Naive thymus-derived CD8-positive, alpha-beta T cell (primary cell): ENCODE measurements at regions of chr2 and their contacts with region 1.

Region 1: DNA sequence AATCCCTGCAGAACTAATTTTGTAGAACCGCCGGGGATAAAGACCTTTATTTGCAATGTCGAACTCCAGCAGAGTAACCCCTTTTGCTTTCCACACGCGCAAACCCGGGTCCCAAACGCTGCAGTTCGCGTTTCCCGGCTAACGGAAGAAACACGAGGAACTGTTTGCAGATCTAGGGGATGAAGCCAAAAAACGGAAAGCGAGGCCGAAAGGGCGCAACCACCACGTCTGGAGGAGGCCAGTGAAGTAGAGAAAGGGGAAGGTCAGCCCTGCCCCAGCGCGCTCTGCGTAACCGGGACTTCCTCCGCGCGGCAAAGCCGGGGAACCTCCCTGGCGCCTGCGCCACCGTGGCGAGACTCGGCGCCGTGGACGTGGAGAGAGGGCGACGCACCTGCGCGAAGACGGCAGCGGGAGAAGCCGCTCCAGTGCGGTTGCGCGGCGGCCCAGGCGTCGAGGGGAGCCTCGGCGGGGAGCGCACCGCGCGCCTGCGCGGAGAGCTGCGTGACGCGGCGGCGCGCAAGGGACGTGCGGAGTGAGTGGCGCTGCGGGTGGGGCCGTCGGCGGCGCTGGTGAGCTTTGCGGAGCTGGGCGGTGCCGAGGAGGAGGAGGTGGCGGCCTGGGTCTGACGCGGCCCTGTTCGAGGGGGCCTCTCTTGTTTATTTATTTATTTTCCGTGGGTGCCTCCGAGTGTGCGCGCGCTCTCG is at the start of gene PPP1CB:
- DNase-seq: peak; percentile 89 to 99 (median 98)
- ATAC-seq: peak; percentile 83 to 87
- H3K4me3 Mint-ChIP-seq: peak within 1 kb of the TSS; percentile 88 to 98 (median 96)
- H3K27ac Mint-ChIP-seq: peak within 1 kb of the TSS; percentile 89 to 100 (median 98)
- H3K4me1 Mint-ChIP-seq: peaks cover 23 to 64% (median 60%) of the 10 kb centered on the region in 4 donors
- H3K27me3 Mint-ChIP-seq: no peaks in the 10 kb centered on the region
- polyA plus RNA-seq, gene PPP1CB: 63.1 to 85.7 (median 82.1) TPM

Region 2: GRCh38 chr2:28566521-28567041 is 184.8 kb before region 1 on chr2:
- POLR2A ChIA-PET with region 1: interaction called, 10 read pairs
- DNase-seq: peak; percentile 80 to 92 (median 91)
- ATAC-seq: peak; percentile 93
- H3K4me3 Mint-ChIP-seq: peak overlapping the region; percentile 87 to 96 (median 93)
- H3K27ac Mint-ChIP-seq: peak overlapping the region; percentile 58 to 97 (median 94)
- H3K4me1 Mint-ChIP-seq: peaks cover 3 to 21% (median 12%) of the 10 kb centered on the region in 4 donors
- H3K27me3 Mint-ChIP-seq: peaks cover 0 to 6% (median 0%) of the 10 kb centered on the region in 5 donors

Region 3: DNA sequence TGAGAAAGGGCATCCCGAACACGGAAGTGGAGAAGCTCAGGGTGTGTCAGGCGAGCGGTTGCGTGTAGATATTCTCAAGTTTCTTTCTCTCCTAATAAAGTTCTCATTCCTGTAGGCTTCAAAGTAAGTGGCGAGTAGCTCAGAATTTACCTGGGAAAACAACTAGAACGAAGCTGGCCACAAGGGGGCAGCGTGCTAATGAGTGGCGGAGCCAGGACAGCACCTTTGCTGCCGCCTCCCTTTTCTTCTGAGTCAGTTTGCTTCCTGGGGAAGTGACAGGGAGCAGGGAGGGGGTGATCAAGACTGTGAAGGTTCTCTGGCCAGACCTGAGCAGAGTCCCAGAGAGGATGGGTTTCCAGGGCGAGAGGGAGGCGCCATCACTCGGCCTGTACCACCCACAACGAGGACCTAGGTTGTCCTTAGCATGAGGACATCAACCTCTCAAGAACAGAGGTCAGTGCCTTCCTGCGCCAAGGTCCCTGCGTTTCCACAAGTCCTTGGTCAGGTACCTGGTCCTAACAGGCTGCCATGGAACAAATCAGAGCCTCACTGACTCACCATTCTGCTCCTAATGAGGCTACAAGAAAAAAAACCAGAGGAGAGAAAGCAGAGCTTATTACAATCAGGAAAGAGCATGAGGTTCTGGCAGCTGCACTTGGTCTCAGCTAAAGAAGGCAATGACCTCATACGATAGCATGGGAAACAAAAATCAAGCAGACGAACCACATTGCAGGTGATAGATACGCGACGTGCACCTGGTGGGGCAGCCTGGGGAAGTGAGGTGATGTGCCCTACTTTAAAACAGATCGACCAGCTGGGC is 156.9 kb before region 1 on chr2:
- POLR2A ChIA-PET with region 1: interaction called, 50 read pairs
- DNase-seq: peak; percentile 70 to 92 (median 81)
- ATAC-seq: peak; percentile 81 to 83
- H3K4me3 Mint-ChIP-seq: peak overlapping the region; percentile 31 to 81 (median 71)
- H3K27ac Mint-ChIP-seq: peak overlapping the region; percentile 77 to 97 (median 93)
- H3K4me1 Mint-ChIP-seq: peaks cover 13 to 22% (median 17%) of the 10 kb centered on the region in 4 donors
- H3K27me3 Mint-ChIP-seq: peaks cover 0 to 16% (median 3%) of the 10 kb centered on the region in 5 donors

Region 4: GRCh38 chr2:28621172-28622100 is 130.0 kb before region 1 on chr2:
- POLR2A ChIA-PET with region 1: interaction called, 22 read pairs
- DNase-seq: peak; percentile 44 to 95 (median 88)
- ATAC-seq: peak; percentile 85 to 88
- H3K4me3 Mint-ChIP-seq: peak overlapping the region; percentile 67 to 87 (median 80)
- H3K27ac Mint-ChIP-seq: peak overlapping the region; percentile 91 to 100 (median 98)
- H3K4me1 Mint-ChIP-seq: peaks cover 55 to 94% (median 88%) of the 10 kb centered on the region in 4 donors
- H3K27me3 Mint-ChIP-seq: no peaks in the 10 kb centered on the region

Region 5: GRCh38 chr2:28870146-28870891 is 118.9 kb after region 1 on chr2 and contains the start of gene TRMT61B:
- POLR2A ChIA-PET with region 1: interaction called, 11 read pairs
- DNase-seq: peak; percentile 93 to 98 (median 96)
- ATAC-seq: peak; percentile 93
- H3K4me3 Mint-ChIP-seq: peak within 1 kb of the TSS; percentile 93 to 100 (median 96)
- H3K27ac Mint-ChIP-seq: peak within 1 kb of the TSS; percentile 97 to 100 (median 100)
- H3K4me1 Mint-ChIP-seq: peaks cover 12 to 44% (median 36%) of the 10 kb centered on the region in 4 donors
- H3K27me3 Mint-ChIP-seq: peaks cover 0 to 2% (median 0%) of the 10 kb centered on the region in 5 donors
- polyA plus RNA-seq, gene TRMT61B: 17.0 to 21.5 (median 19.5) TPM